ENCODE measurements at regions of chr16 and their contacts with region 1.

Region 1: DNA sequence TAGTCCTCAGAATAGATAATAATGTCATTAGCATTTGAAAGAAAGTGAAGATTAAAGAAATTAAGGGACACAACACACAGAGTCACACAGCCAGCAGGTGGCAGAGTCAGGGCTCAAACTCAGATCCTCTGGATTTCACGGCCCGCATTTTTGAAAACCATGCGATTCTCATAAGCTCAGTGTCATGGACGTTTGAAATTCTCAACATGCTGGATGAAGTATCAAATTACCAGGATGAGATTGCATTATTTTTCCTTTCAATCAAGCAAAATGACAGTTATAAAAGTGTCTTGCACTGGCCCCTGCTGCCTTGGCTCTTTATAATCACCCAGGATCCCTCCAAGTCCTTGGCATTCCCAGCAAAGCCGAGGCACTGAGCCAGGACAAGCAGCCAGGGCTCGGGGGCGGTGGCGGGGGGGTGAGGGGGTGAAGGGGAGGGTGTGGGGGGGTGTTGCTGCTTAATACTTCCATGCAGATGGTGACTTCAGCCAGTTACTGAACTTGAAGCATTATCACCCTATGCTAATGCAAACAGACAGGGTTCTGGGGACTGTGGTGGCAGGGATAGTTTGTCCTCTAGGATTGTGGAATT is 6.6 kb upstream of the BMERB1 start:
- DNase-seq: peak; percentile 87
- H3K4me3 ChIP-seq: no peak overlapping the region
- H3K27ac ChIP-seq: no peak overlapping the region
- H3K4me1 ChIP-seq: no peaks in the 10 kb centered on the region
- H3K27me3 ChIP-seq: no peaks in the 10 kb centered on the region
- CTCF ChIP-seq: peak; percentile 77

Region 2: GRCh38 chr16:15548482-15548891 is 120.7 kb after region 1 on chr16:
- CTCF ChIA-PET with region 1: interaction called, 9 read pairs
- POLR2A ChIA-PET with region 1: no interaction called
- intact Hi-C with region 1: loop called (anchors 2 kb)
- DNase-seq: peak; percentile 14
- H3K4me3 ChIP-seq: no peak overlapping the region
- H3K27ac ChIP-seq: no peak overlapping the region
- H3K4me1 ChIP-seq: no peaks in the 10 kb centered on the region
- H3K27me3 ChIP-seq: no peaks in the 10 kb centered on the region
- CTCF ChIP-seq: no peak

Region 3: DNA sequence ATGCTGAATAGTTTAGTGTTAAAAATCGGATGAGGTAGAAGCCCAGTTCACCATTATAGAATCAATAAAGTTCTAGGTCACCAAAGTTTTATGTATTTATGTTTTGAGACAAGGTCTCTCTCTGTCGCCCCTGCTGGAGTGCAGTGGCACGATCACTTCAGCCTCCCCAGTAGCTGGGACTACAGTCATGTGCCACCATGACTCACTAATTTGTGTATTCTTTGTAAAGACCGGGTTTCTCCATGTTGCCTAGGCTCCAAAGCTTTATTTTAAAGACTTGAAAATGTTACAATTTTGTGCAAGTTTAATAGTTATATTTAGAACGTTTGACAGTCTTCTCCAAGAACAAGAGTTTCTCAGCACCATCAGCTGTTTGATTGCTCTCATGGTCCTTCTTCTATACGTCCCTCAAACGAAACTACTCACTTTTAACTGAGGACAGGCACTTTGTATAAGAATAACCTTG is 254.4 kb after region 1 on chr16:
- CTCF ChIA-PET with region 1: no interaction called
- POLR2A ChIA-PET with region 1: no interaction called
- intact Hi-C with region 1: no loop called
- DNase-seq: peak; percentile 76
- H3K4me3 ChIP-seq: no peak overlapping the region
- H3K27ac ChIP-seq: no peak overlapping the region
- H3K4me1 ChIP-seq: peaks cover 8% of the 10 kb centered on the region
- H3K27me3 ChIP-seq: no peaks in the 10 kb centered on the region
- CTCF ChIP-seq: peak; percentile 70

Region 4: GRCh38 chr16:15704545-15704987 is 276.8 kb after region 1 on chr16:
- CTCF ChIA-PET with region 1: no interaction called
- POLR2A ChIA-PET with region 1: no interaction called
- intact Hi-C with region 1: loop called (anchors 2 kb)
- DNase-seq: peak; percentile 64
- H3K4me3 ChIP-seq: no peak overlapping the region
- H3K27ac ChIP-seq: no peak overlapping the region
- H3K4me1 ChIP-seq: no peaks in the 10 kb centered on the region
- H3K27me3 ChIP-seq: no peaks in the 10 kb centered on the region
- CTCF ChIP-seq: peak; percentile 86

Measured in A673 (cell line).